CD4-positive, alpha-beta T cell (primary cell): ENCODE measurements at regions of chr6 and their contacts with region 1.

Region 1: DNA sequence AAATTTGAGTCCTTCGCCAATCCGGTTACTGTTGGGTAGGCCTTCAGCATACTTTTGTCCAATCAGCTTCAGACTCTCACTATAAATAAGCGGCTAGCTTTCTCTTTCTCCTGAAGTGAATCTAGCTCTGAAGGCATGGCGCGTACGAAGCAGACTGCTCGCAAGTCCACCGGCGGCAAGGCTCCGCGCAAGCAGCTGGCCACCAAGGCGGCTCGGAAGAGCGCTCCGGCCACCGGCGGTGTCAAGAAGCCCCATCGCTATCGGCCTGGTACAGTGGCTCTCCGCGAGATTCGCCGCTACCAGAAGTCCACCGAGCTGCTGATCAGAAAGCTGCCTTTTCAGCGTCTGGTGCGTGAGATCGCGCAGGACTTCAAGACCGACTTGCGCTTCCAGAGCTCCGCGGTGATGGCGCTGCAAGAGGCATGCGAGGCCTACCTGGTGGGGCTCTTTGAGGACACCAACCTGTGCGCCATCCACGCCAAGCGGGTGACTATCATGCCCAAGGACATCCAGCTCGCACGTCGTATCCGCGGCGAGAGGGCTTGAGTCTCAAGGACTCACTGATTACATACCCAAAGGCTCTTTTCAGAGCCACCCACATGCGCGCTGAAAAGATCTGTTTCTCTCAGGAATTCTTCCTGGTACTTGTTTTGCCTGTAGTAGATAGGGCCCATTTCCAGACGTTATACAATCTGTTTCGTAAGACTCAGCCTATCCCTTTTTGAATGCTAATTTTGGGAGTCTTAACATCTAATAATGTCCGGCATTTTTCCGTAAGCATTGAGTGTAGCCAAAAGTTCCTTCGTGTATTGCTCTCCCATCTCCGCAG is 102.0 kb downstream of the OR2B2 start:
- DNase-seq: peak; percentile 63 to 98 (median 75)
- ATAC-seq: peak; percentile 61
- H3K4me3 ChIP-seq: peak overlapping the region; percentile 64
- H3K4me3 Mint-ChIP-seq: peak overlapping the region; percentile 95
- H3K27ac ChIP-seq: peak overlapping the region; percentile 69 to 81
- H3K27ac Mint-ChIP-seq: peak overlapping the region; percentile 96
- H3K4me1 ChIP-seq: peaks cover 39% of the 10 kb centered on the region
- H3K4me1 Mint-ChIP-seq: peaks cover 68% of the 10 kb centered on the region
- H3K27me3 ChIP-seq: no peaks in the 10 kb centered on the region
- H3K27me3 Mint-ChIP-seq: no peaks in the 10 kb centered on the region
- CTCF ChIP-seq: no peak

Region 2: DNA sequence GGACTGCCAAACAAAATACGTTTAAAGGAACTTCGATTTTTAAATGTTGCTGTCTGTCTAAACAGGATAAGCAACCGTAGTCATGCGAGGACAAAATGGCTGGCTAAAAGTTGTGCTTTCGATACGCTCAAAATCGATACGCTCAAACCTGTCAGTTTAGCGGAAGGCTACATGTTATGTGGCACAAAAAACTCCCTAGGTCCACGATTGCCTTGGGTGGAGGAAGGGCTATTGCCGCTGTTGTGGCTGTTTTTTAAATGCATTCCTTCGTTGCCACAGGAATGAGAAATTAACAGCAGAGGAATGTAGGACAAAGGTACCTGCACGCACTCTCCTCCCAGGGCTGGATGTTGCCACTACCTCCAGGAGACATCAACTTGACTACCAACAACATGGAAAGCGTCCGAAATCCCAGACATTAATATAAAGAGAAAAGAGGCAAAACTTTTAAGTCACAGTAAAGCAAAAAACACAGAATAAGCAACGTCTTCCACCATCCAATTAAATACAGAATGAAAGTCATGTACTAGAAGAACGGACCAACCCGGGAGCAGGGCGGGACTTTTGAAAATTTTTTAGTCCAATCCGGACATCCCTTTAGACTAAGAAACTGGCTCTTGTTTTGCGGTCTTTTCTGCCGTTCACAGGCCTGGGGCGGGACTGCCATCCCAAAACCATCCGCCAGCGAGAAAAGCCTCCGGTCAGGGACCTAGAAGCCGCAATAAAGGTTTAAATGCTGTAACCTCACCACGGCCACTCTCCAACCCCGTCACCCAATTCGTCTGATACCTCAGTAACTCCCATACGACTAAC is 1755.1 kb before region 1 on chr6:
- CTCF ChIA-PET with region 1: no interaction called
- POLR2A ChIA-PET with region 1: interaction called, 19 read pairs
- intact Hi-C with region 1: no loop called
- DNase-seq: peak; percentile 68 to 97 (median 80)
- ATAC-seq: peak; percentile 71
- H3K4me3 ChIP-seq: peak overlapping the region; percentile 89
- H3K4me3 Mint-ChIP-seq: peak overlapping the region; percentile 97
- H3K27ac ChIP-seq: peak overlapping the region; percentile 81
- H3K27ac Mint-ChIP-seq: peak overlapping the region; percentile 96
- H3K4me1 ChIP-seq: peaks cover 29% of the 10 kb centered on the region
- H3K4me1 Mint-ChIP-seq: peaks cover 28% of the 10 kb centered on the region
- H3K27me3 ChIP-seq: no peaks in the 10 kb centered on the region
- H3K27me3 Mint-ChIP-seq: no peaks in the 10 kb centered on the region
- CTCF ChIP-seq: no peak

Region 3: DNA sequence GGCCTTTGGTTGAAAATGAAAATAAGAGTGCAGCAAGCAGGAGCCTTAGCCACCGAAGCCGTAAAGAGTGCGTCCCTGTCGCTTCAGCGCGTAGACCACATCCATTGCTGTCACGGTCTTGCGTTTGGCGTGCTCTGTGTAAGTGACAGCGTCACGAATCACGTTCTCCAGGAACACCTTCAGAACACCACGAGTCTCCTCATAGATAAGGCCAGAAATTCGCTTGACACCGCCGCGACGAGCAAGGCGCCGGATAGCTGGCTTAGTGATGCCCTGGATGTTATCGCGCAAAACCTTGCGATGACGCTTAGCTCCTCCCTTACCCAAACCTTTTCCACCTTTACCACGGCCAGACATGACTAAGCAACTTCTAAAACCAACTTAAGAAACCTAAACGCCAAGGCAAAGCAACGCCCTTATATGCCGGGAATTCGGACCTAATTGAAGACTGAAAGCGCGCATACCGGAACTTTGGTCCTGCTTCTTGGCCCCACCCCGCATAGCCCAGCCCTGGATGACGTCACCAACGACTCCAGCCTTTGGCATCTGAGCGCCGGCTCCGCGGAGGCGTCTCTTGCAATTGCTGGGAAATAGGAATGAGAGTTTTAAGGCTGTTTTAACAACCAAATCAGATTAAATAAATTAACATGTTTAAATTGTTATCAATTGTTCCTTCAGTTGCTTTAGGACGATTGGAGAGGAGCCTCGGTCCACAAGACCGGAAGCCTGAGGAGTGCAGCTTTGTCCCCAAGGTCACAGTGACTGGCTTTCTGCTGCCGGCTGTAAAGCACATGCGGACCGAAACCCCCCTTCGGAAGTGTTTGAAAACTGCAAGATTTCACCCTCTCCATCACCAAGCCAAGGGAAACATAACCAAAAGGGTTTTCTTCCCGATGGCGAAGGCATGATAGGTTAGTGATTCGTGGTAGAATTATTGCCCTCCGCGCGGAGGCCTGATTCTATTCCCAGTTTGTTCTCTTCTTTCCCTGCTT is 1524.7 kb before region 1 on chr6:
- CTCF ChIA-PET with region 1: no interaction called
- POLR2A ChIA-PET with region 1: interaction called, 14 read pairs
- intact Hi-C with region 1: no loop called
- DNase-seq: peak; percentile 85 to 99 (median 92)
- ATAC-seq: peak; percentile 82
- H3K4me3 ChIP-seq: peak overlapping the region; percentile 62
- H3K4me3 Mint-ChIP-seq: peak overlapping the region; percentile 87
- H3K27ac ChIP-seq: peak overlapping the region; percentile 82 to 85
- H3K27ac Mint-ChIP-seq: peak overlapping the region; percentile 96
- H3K4me1 ChIP-seq: peaks cover 16% of the 10 kb centered on the region
- H3K4me1 Mint-ChIP-seq: peaks cover 24% of the 10 kb centered on the region
- H3K27me3 ChIP-seq: no peaks in the 10 kb centered on the region
- H3K27me3 Mint-ChIP-seq: peaks cover 11% of the 10 kb centered on the region
- CTCF ChIP-seq: no peak

Region 4: GRCh38 chr6:27753668-27754407 is 56.3 kb before region 1 on chr6:
- CTCF ChIA-PET with region 1: interaction called, 6 read pairs
- POLR2A ChIA-PET with region 1: interaction called, 20 read pairs
- intact Hi-C with region 1: loop called in 1 of 2 experiments (anchors 10 kb)
- DNase-seq: peak; percentile 31 to 81 (median 54)
- ATAC-seq: peak; percentile 11
- H3K4me3 ChIP-seq: peak overlapping the region; percentile 71
- H3K4me3 Mint-ChIP-seq: peak overlapping the region; percentile 97
- H3K27ac ChIP-seq: no peak overlapping the region
- H3K27ac Mint-ChIP-seq: peak overlapping the region; percentile 98
- H3K4me1 ChIP-seq: peaks cover 22% of the 10 kb centered on the region
- H3K4me1 Mint-ChIP-seq: peaks cover 41% of the 10 kb centered on the region
- H3K27me3 ChIP-seq: no peaks in the 10 kb centered on the region
- H3K27me3 Mint-ChIP-seq: peaks cover 10% of the 10 kb centered on the region
- CTCF ChIP-seq: no peak

Region 5: DNA sequence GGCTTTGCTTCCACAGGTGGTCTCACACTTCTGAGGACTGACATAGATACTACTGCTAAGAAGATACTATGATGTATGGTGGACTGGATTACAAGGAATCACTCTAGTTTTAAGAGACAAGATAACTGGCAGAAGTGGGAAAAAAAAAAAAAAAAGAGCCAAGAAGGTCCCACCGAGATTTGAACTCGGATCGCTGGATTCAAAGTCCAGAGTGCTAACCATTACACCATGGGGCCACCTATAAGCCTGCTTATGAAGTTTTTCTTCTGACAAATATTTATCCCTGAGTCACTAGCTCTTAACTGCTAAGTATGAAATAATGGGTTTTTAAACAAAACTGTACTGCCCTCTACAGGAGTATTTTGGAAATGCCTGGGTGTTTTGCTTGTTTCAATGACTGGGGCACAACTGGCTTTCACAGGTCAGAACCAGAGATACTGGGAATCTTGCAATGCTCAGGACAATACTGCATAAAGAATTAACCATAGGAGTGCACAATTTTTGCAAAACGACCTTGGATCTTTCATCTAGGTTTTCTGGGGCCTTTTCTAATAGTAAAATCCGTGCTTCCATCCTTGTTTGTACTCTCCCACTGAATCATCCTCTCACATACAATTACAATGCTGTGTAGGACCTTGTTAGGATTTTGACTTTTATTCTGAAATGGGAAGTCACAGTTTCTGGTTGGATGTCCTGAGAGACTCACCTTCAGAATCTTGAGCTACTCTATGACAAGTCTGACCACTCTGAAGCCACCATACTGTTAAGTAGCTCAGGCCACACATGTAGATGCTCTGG is 14.3 kb before region 1 on chr6:
- CTCF ChIA-PET with region 1: interaction called, 19 read pairs
- POLR2A ChIA-PET with region 1: interaction called, 6 read pairs
- intact Hi-C with region 1: no loop called
- DNase-seq: peak in 9 of 14 experiments; percentile 11 to 88 (median 36)
- ATAC-seq: peak; percentile 72
- H3K4me3 ChIP-seq: no peak overlapping the region
- H3K4me3 Mint-ChIP-seq: peak overlapping the region; percentile 47
- H3K27ac ChIP-seq: no peak overlapping the region
- H3K27ac Mint-ChIP-seq: peak overlapping the region; percentile 80
- H3K4me1 ChIP-seq: peaks cover 20% of the 10 kb centered on the region
- H3K4me1 Mint-ChIP-seq: peaks cover 31% of the 10 kb centered on the region
- H3K27me3 ChIP-seq: peaks cover 5 to 9% of the 10 kb centered on the region in 2 experiments
- H3K27me3 Mint-ChIP-seq: peaks cover 18% of the 10 kb centered on the region
- CTCF ChIP-seq: peak; percentile 80

Region 6: DNA sequence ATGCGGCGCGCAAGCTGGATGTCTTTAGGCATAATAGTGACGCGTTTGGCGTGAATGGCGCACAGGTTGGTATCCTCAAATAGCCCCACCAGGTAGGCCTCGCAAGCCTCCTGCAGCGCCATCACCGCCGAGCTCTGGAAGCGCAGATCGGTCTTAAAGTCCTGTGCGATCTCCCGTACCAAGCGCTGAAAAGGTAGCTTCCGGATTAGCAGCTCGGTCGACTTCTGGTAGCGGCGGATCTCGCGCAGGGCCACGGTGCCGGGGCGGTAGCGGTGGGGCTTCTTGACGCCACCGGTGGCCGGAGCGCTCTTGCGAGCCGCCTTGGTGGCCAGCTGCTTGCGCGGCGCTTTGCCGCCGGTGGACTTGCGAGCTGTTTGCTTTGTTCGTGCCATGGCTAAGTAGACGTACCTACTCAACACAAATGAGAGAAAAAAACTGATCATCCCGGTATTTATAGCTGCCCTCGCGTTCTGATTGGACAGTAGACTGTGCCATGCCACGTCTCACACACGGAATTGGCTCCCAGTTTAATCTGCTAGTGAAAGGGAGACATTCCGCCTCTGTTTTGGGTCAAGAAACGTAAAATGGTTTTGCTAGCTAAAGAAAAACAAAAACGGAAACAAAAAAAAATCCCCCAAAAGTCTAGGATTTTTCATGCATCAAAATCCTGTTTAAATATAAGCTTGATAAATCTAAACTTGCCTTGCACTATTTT is 61.9 kb after region 1 on chr6:
- CTCF ChIA-PET with region 1: interaction called, 38 read pairs
- POLR2A ChIA-PET with region 1: interaction called, 620 read pairs
- intact Hi-C with region 1: loop called (anchors 1 to 5 kb)
- DNase-seq: peak; percentile 71 to 97 (median 82)
- ATAC-seq: peak; percentile 75
- H3K4me3 ChIP-seq: peak overlapping the region; percentile 86
- H3K4me3 Mint-ChIP-seq: peak overlapping the region; percentile 93
- H3K27ac ChIP-seq: peak overlapping the region; percentile 89
- H3K27ac Mint-ChIP-seq: peak overlapping the region; percentile 93
- H3K4me1 ChIP-seq: peaks cover 39% of the 10 kb centered on the region
- H3K4me1 Mint-ChIP-seq: peaks cover 41% of the 10 kb centered on the region
- H3K27me3 ChIP-seq: no peaks in the 10 kb centered on the region
- H3K27me3 Mint-ChIP-seq: no peaks in the 10 kb centered on the region
- CTCF ChIP-seq: peak; percentile 43

Region 7: GRCh38 chr6:28172006-28172405 is 361.9 kb after region 1 on chr6:
- CTCF ChIA-PET with region 1: no interaction called
- POLR2A ChIA-PET with region 1: no interaction called
- intact Hi-C with region 1: no loop called
- DNase-seq: no peak
- ATAC-seq: no peak
- H3K4me3 ChIP-seq: no peak overlapping the region
- H3K4me3 Mint-ChIP-seq: no peak overlapping the region
- H3K27ac ChIP-seq: no peak overlapping the region
- H3K27ac Mint-ChIP-seq: no peak overlapping the region
- H3K4me1 ChIP-seq: no peaks in the 10 kb centered on the region
- H3K4me1 Mint-ChIP-seq: no peaks in the 10 kb centered on the region
- H3K27me3 ChIP-seq: peaks cover 3 to 4% of the 10 kb centered on the region in 2 experiments
- H3K27me3 Mint-ChIP-seq: peaks cover 29% of the 10 kb centered on the region
- CTCF ChIP-seq: no peak